Motor neuron (in vitro differentiated cells): ENCODE measurements at regions of chr7 and their contacts with region 1.

Region 1: DNA sequence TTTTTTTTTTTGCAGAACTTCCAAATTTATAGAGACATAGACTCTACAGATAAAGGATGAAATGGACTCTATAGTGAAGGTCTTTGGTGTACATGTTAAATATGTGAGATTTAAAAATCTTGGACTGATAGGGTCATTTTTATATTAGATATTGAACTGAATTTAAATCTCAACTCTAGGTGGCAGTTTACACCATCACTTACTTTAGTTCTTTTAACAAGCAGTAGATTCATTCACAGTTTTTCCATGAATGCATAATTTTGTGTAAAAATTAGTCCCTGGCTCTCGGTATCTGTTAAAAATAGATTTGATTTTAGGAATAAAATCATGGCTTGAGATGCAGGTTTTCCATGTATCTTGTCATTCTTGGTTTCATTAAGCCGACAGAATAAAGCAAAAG is 31.1 kb upstream of the SNX13 start:
- ATAC-seq: no peak
- H3K4me3 ChIP-seq: no peak overlapping the region
- H3K27ac ChIP-seq: no peak overlapping the region
- H3K4me1 ChIP-seq: no peaks in the 10 kb centered on the region

Region 2: GRCh38 chr7:17564678-17565212 is 406.7 kb before region 1 on chr7:
- in situ Hi-C with region 1: no loop called
- ATAC-seq: peak in 1 of 8 experiments; percentile 86
- H3K4me3 ChIP-seq: no peak overlapping the region
- H3K27ac ChIP-seq: no peak overlapping the region
- H3K4me1 ChIP-seq: no peaks in the 10 kb centered on the region

Region 3: DNA sequence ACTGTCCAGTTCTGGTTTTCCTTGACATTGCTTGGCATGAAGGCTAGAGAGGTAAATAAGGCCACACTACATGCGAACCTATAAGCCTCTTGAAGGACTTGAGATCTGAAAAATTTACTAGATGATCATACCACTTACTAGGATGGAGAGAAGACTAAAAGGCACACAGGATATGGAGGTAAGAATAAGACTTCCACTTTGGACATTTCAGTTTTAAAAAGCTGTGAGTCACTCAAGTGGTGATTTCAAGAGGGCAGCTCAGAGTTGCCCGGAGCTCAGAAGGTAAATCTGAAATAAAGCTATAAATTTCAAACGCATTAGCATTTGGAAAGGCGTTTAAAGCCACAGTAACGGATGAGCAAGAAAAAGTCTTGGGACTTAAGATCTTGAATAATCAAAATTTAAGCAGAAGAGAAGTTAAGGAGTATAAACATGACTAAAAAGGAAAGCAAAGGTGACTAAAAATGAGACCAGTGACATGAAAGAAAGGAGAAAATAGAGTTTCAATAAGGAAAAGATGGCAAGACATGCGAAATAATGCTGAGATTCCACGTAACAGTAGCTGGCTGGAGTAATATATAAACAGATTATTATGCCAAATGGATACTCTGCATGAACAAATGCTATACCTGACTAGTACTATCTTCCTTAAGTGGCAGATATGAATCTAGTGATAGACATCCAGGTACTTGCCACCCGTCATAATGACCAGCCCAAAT is 99.4 kb before region 1 on chr7:
- in situ Hi-C with region 1: no loop called
- ATAC-seq: no peak
- H3K4me3 ChIP-seq: no peak overlapping the region
- H3K27ac ChIP-seq: no peak overlapping the region
- H3K4me1 ChIP-seq: no peaks in the 10 kb centered on the region

Region 4: DNA sequence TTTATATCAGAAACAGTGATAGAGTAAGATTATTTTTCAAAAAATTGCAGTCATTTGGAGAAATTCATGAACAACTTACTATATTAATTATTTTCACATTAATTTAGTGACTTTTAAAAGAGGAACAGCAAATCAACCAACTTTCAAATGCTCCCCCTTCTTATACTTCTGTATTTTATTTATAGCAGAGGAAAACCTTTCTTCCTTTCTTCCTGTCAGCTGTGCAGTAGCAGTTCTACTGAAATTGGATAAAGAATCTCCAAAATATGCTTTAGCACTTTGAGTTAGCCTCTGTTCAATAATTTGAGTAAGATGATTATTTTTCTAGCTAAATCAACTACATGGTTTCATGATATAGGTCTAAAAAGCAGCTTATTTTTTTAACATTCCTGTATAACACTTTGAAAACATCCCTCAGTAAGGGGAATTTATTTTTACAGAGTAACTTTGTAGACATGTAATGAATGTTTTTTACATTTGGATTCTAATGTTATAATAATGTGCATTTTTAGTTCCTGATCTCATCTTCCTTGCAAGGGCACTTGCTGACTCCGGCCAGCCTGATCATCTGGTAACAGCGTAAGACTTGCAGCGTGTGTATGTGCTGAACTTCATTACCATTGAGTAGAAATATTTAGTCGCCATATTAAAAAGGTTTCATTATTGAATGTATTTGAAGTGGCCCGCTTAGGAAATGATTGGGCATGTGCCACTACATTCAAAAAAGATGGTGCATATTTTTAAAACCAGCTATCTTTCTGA is 365.8 kb after region 1 on chr7:
- in situ Hi-C with region 1: loop called in 3 of 9 experiments (anchors 10 to 25 kb)
- ATAC-seq: peak in 4 of 8 experiments; percentile 32 to 77 (median 66)
- H3K4me3 ChIP-seq: no peak overlapping the region
- H3K27ac ChIP-seq: no peak overlapping the region
- H3K4me1 ChIP-seq: no peaks in the 10 kb centered on the region